ENCODE measurements at regions of chr11 and their contacts with region 1.

Region 1: GRCh38 chr11:81135570-81135969 is 1598.1 kb downstream of the FAM181B start:
- DNase-seq: no peak

Region 2: DNA sequence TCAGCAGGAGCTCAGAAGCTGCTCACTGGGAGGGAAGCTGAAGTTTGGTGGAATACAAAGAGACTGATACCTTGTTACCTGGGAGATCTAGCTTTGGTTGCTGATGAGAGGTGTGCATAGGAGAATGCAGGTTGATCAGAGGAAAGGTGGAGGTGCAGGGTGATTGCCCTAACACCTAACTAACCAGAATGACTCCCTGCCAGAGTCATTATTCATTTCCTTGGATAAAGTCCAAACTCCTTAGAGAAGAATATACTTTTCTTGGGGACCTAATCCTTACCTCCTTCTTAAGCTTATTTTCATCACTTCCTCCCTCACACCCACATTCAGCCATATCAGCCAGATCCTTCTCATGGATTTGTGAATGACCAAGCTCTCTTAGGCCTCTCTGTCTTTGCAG is 880.5 kb before region 1 on chr11:
- intact Hi-C with region 1: loop called in 1 of 2 experiments (anchors 5 kb)
- DNase-seq: no peak

Measured in posterior vena cava (tissue), 2 donors.